ENCODE measurements at regions of chr13 and their contacts with region 1.

Region 1: GRCh38 chr13:75537401-75538365 is at the start of gene COMMD6:
- DNase-seq: peak; percentile 94
- H3K4me3 Mint-ChIP-seq: peak within 1 kb of the TSS; percentile 93
- H3K27ac Mint-ChIP-seq: peak within 1 kb of the TSS; percentile 92
- H3K4me1 Mint-ChIP-seq: peaks cover 32% of the 10 kb centered on the region
- H3K27me3 Mint-ChIP-seq: no peaks in the 10 kb centered on the region
- CTCF ChIP-seq: no peak
- total RNA-seq, gene COMMD6: 132 TPM in 2 replicates

Region 2: GRCh38 chr13:75489502-75490263 is 48.0 kb before region 1 on chr13:
- CTCF ChIA-PET with region 1: interaction called, 3 read pairs
- POLR2A ChIA-PET with region 1: interaction called, 10 read pairs
- intact Hi-C with region 1: no loop called
- DNase-seq: peak; percentile 73
- H3K4me3 Mint-ChIP-seq: peak overlapping the region; percentile 69
- H3K27ac Mint-ChIP-seq: peak overlapping the region; percentile 88
- H3K4me1 Mint-ChIP-seq: peaks cover 8% of the 10 kb centered on the region
- H3K27me3 Mint-ChIP-seq: no peaks in the 10 kb centered on the region
- CTCF ChIP-seq: no peak

Region 3: GRCh38 chr13:75518439-75519088 is 19.1 kb before region 1 on chr13:
- CTCF ChIA-PET with region 1: interaction called, 4 read pairs
- POLR2A ChIA-PET with region 1: interaction called, 14 read pairs
- intact Hi-C with region 1: no loop called
- DNase-seq: no peak
- H3K4me3 Mint-ChIP-seq: no peak overlapping the region
- H3K27ac Mint-ChIP-seq: no peak overlapping the region
- H3K4me1 Mint-ChIP-seq: no peaks in the 10 kb centered on the region
- H3K27me3 Mint-ChIP-seq: no peaks in the 10 kb centered on the region
- CTCF ChIP-seq: no peak

Region 4: GRCh38 chr13:75647126-75647784 is 109.6 kb after region 1 on chr13:
- CTCF ChIA-PET with region 1: no interaction called
- POLR2A ChIA-PET with region 1: no interaction called
- intact Hi-C with region 1: no loop called
- DNase-seq: no peak
- H3K4me3 Mint-ChIP-seq: no peak overlapping the region
- H3K27ac Mint-ChIP-seq: no peak overlapping the region
- H3K4me1 Mint-ChIP-seq: no peaks in the 10 kb centered on the region
- H3K27me3 Mint-ChIP-seq: no peaks in the 10 kb centered on the region
- CTCF ChIP-seq: no peak